ENCODE measurements at regions of chr22 and their contacts with region 1.

Region 1: GRCh38 chr22:33049119-33049729 is 9.0 kb downstream of the SYN3 start:
- DNase-seq: peak; percentile 75
- H3K4me3 Mint-ChIP-seq: no peak overlapping the region
- H3K27ac Mint-ChIP-seq: no peak overlapping the region
- H3K4me1 Mint-ChIP-seq: no peaks in the 10 kb centered on the region
- H3K27me3 Mint-ChIP-seq: peaks cover 24% of the 10 kb centered on the region
- CTCF ChIP-seq: peak; percentile 89

Region 2: DNA sequence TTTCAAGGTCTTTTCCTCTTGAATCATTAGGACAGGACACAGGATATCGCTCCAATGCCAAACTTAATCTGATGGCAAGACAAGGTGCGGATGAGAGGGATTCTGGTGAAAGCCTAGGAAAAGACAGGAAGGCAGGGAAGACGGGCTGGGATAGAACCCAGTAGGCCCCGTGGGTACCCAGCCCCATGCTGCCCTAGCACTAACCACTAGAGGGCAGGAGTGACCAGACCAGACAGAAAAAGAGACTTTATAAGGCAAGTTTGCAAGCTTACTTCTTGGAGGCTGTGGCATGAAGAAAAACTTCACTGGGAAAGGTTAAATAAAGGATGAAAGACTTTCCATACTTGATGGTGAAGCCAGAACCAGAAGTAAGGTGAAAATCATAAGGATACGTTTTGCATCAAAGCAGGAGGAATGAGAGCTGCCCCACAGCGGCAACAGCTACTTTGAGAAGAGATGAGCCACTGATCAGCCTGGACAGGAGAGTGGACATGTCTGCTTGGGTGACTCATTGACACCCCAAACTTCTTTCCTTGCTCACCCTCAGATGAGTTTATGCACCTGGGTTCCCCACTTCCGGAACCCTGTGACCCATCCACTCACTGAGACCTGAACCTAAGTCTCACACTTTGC is 30.9 kb before region 1 on chr22:
- CTCF ChIA-PET with region 1: interaction called, 126 read pairs
- POLR2A ChIA-PET with region 1: interaction called, 3 read pairs
- intact Hi-C with region 1: loop called (anchors 1 kb)
- DNase-seq: peak; percentile 57
- H3K4me3 Mint-ChIP-seq: no peak overlapping the region
- H3K27ac Mint-ChIP-seq: no peak overlapping the region
- H3K4me1 Mint-ChIP-seq: peaks cover 14% of the 10 kb centered on the region
- H3K27me3 Mint-ChIP-seq: no peaks in the 10 kb centered on the region
- CTCF ChIP-seq: peak; percentile 80

Region 3: DNA sequence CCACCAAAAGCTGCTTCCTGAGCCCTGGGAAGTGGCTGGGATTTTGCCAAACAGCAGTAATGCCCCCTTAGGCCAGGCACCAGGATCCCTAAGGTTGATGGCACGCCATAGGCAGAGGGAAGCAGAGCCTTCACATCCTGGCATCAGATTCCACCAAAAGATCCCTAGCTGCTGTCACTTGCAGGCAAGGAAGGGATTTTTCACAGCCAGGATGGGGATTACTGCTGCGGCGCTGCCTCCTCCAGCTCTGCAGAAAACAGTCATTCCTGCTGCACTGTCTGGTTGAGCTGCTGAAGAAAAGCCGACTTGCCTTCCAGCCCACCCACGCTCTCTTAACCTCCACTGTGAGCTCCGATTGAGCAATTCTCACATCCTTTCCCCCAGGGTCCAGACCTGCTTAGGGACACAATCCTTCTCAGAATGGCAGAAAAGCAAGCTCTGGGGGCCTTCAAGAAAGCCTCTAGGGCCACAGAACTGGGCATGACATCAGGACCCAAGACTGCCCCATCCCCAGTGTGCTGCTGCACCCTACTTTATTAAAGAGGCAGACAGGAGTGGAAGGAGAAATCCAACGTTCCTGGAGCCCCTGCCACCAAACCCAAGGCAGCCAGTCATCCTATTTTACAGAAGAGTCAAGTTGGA is 11.0 kb before region 1 on chr22:
- CTCF ChIA-PET with region 1: interaction called, 70 read pairs
- POLR2A ChIA-PET with region 1: interaction called, 6 read pairs
- intact Hi-C with region 1: no loop called
- DNase-seq: peak; percentile 54
- H3K4me3 Mint-ChIP-seq: no peak overlapping the region
- H3K27ac Mint-ChIP-seq: no peak overlapping the region
- H3K4me1 Mint-ChIP-seq: peaks cover 20% of the 10 kb centered on the region
- H3K27me3 Mint-ChIP-seq: no peaks in the 10 kb centered on the region
- CTCF ChIP-seq: no peak

Region 4: GRCh38 chr22:33083212-33083611 is 34.0 kb after region 1 on chr22:
- CTCF ChIA-PET with region 1: interaction called, 11 read pairs
- POLR2A ChIA-PET with region 1: no interaction called
- intact Hi-C with region 1: no loop called
- DNase-seq: peak; percentile 17
- H3K4me3 Mint-ChIP-seq: no peak overlapping the region
- H3K27ac Mint-ChIP-seq: no peak overlapping the region
- H3K4me1 Mint-ChIP-seq: no peaks in the 10 kb centered on the region
- H3K27me3 Mint-ChIP-seq: peaks cover 38% of the 10 kb centered on the region
- CTCF ChIP-seq: peak; percentile 29

Region 5: DNA sequence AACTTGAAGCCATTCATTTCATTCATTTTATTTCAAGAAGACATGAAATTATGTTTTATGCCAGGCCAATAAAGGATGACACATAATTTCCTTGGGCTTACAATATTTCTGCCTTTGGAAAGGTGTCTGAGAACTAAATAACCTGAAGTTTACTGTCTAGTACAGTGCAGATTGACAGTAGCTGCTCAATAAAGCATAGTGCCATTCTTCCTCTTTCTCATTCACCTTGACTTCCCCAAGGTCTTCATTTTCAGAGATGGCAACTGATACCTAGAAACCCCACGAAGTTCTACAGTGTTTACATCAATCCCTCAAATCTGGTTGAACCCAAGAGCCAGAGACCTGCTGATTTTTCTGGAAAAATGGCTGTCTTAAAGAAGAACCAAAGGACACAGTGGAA is 153.2 kb after region 1 on chr22:
- CTCF ChIA-PET with region 1: interaction called, 42 read pairs
- POLR2A ChIA-PET with region 1: no interaction called
- intact Hi-C with region 1: no loop called
- DNase-seq: no peak
- H3K4me3 Mint-ChIP-seq: no peak overlapping the region
- H3K27ac Mint-ChIP-seq: no peak overlapping the region
- H3K4me1 Mint-ChIP-seq: peaks cover 9% of the 10 kb centered on the region
- H3K27me3 Mint-ChIP-seq: peaks cover 43% of the 10 kb centered on the region
- CTCF ChIP-seq: no peak

Measured in MCF 10A (cell line).